ENCODE measurements at regions of chr12 and their contacts with region 1.

Region 1: GRCh38 chr12:111434680-111435338 is 29.1 kb downstream of the SH2B3 start:
- DNase-seq: peak; percentile 89
- H3K4me3 Mint-ChIP-seq: peak overlapping the region; percentile 75
- H3K27ac Mint-ChIP-seq: peak overlapping the region; percentile 100
- H3K4me1 Mint-ChIP-seq: peaks cover 92% of the 10 kb centered on the region
- H3K27me3 Mint-ChIP-seq: peaks cover 8% of the 10 kb centered on the region

Region 2: GRCh38 chr12:111196532-111196931 is 238.3 kb before region 1 on chr12:
- CTCF ChIA-PET with region 1: no interaction called
- DNase-seq: no peak
- H3K4me3 Mint-ChIP-seq: no peak overlapping the region
- H3K27ac Mint-ChIP-seq: no peak overlapping the region
- H3K4me1 Mint-ChIP-seq: peaks cover 5% of the 10 kb centered on the region
- H3K27me3 Mint-ChIP-seq: peaks cover 38% of the 10 kb centered on the region

Region 3: DNA sequence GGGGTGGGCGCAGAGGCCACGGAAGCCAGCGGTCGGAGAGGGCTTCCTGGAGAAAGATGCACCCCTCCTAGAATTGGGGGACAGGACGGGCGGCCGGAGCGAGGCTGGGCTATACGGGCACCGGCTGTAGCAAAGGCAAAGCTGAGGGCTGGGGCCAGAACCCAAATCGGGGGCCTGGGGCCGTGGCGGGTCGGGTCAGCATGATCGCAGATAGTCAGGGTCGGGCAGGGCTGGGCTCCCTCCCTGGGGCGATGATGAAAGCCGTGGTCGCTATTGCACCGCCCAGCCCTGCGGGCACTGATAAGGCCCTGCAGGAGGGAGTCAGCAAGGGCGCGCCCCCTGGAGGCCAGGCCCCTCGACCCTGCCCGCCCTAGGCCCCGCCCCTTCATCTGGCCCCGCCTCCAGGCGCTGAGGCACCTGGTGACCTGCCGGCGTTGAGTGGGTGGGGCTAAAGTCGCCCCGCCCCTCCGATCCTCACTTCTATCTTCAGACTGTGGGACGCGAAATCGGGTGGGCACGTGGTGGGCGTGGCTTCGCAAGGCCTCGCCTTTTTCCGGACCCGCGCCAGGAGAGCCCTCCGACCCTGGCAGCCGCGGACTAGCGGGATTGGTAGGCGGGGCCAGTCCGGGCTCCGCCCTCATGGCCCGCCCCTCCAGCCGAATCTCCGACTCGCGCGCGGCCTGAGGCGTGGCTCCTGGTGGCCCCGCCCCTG is 29.5 kb before region 1 on chr12:
- CTCF ChIA-PET with region 1: interaction called, 757 read pairs
- DNase-seq: peak; percentile 100
- H3K4me3 Mint-ChIP-seq: peak overlapping the region; percentile 76
- H3K27ac Mint-ChIP-seq: peak overlapping the region; percentile 91
- H3K4me1 Mint-ChIP-seq: peaks cover 61% of the 10 kb centered on the region
- H3K27me3 Mint-ChIP-seq: peaks cover 4% of the 10 kb centered on the region

Region 4: DNA sequence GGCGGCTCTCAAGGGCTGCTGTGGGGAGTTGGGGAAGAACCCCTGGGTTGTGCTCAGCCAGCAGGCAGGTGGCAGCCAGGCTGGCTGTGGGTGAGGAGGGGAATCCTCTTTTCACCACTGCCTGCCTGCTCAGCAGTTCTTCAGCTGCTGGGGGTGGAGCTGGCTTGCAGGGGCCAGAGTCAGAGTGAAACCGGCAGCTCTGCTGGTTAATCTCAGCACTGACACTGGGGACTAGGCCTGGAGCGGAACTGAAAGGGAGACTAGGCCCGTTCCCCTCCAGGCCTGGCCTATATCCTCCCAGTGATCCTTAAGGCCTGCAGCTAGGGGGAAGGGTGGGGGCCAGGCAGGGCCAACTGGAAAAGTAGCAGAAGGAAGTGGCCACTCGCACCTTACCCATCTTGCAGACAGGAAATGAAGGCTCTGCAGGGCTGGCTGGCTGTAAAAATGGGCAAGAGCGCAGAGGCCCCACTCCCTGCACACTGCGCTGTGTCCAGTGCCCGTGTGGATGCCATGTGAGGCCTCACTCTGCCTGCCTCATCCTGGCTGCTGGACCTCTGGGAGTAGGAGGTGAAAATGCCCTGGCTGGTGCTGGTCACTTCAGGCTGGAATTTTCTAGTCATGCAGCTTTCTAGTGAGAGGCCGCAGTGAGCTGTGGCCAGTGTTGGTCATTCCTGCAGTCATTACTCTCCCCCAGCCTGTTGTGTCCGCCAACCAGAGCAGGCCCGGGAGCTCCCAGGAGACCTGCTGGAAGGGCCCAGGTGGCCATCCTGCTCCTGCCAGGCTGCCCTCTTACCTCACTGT is 10.3 kb after region 1 on chr12:
- CTCF ChIA-PET with region 1: interaction called, 27 read pairs
- DNase-seq: peak; percentile 93
- H3K4me3 Mint-ChIP-seq: peak overlapping the region; percentile 58
- H3K27ac Mint-ChIP-seq: peak overlapping the region; percentile 95
- H3K4me1 Mint-ChIP-seq: peaks cover 85% of the 10 kb centered on the region
- H3K27me3 Mint-ChIP-seq: no peaks in the 10 kb centered on the region

Region 5: DNA sequence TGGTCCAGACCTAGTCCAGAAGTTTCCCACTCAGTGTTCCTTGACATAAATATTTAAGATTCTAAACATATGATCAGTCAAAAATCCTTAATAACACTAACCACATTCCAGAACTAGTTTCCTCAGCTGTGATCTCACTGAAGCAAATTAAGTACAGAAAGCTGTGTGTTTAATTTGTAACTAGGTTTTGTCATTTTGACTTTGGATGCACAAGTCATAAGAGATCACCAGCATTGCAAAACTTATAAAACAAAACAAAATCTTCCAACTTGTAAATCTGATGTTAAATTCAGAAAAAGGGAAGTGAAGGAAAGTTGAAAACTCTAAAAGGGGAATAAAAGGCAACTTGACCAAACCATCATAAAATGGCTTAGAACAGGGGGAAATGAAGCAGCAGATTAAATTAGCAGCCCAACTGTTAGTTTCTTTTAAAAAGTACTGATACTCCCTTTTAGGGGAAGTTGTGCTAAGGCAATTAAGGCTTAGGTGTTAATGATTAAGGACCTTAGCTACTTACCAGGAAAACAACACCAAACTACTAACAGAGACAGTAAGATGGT is 27.5 kb after region 1 on chr12:
- CTCF ChIA-PET with region 1: no interaction called
- DNase-seq: no peak
- H3K4me3 Mint-ChIP-seq: no peak overlapping the region
- H3K27ac Mint-ChIP-seq: no peak overlapping the region
- H3K4me1 Mint-ChIP-seq: no peaks in the 10 kb centered on the region
- H3K27me3 Mint-ChIP-seq: no peaks in the 10 kb centered on the region

Region 6: GRCh38 chr12:111529424-111530368 is 94.9 kb after region 1 on chr12:
- CTCF ChIA-PET with region 1: no interaction called
- DNase-seq: peak; percentile 73
- H3K4me3 Mint-ChIP-seq: no peak overlapping the region
- H3K27ac Mint-ChIP-seq: no peak overlapping the region
- H3K4me1 Mint-ChIP-seq: no peaks in the 10 kb centered on the region
- H3K27me3 Mint-ChIP-seq: no peaks in the 10 kb centered on the region

Measured in activated naive CD4-positive, alpha-beta T cell treated with anti-CD3 and anti-CD28 coated beads, Interleukin-2, amount 10 ng/mL, durations not matched to agents 7 days and 5 days (primary cell).